GM12878 (cell line): ENCODE measurements at regions of chr13 and their contacts with region 1.

Region 1: GRCh38 chr13:45623515-45624090 is 8.1 kb upstream of the ERICH6B start:
- DNase-seq: peak; percentile 21
- ATAC-seq: peak; percentile 80
- H3K4me3 ChIP-seq: no peak overlapping the region
- H3K27ac ChIP-seq: no peak overlapping the region
- H3K4me1 ChIP-seq: peaks cover 5% of the 10 kb centered on the region
- H3K27me3 ChIP-seq: peaks cover 0 to 2% of the 10 kb centered on the region in 2 experiments; a peak in 1 of 4 replicates
- CTCF ChIP-seq: peak; percentile 34 to 60 (median 51); a peak in 5 of 6 replicates
- EP300 ChIP-seq: no peak
- POLR2A ChIP-seq: no peak
- RAD21 ChIP-seq: peak; percentile 68

Region 2: GRCh38 chr13:44899967-44900366 is 723.6 kb before region 1 on chr13:
- CTCF ChIA-PET with region 1: no interaction called
- POLR2A ChIA-PET with region 1: no interaction called
- RAD21 ChIA-PET with region 1: no interaction called
- SMC1A ChIA-PET with region 1: no interaction called
- in situ Hi-C with region 1: no loop called
- intact Hi-C with region 1: no loop called
- DNase-seq: no peak
- ATAC-seq: no peak
- H3K4me3 ChIP-seq: no peak overlapping the region
- H3K27ac ChIP-seq: no peak overlapping the region
- H3K4me1 ChIP-seq: no peaks in the 10 kb centered on the region
- H3K27me3 ChIP-seq: peaks cover 0 to 3% of the 10 kb centered on the region in 2 experiments; a peak in 2 of 4 replicates
- CTCF ChIP-seq: no peak
- EP300 ChIP-seq: no peak
- POLR2A ChIP-seq: no peak
- RAD21 ChIP-seq: no peak

Region 3: GRCh38 chr13:45683701-45684100 is 60.1 kb after region 1 on chr13:
- CTCF ChIA-PET with region 1: interaction called, 17 read pairs
- POLR2A ChIA-PET with region 1: interaction called, 4 read pairs
- RAD21 ChIA-PET with region 1: interaction called, 6 read pairs
- SMC1A ChIA-PET with region 1: interaction called, 19 read pairs
- in situ Hi-C with region 1: no loop called
- intact Hi-C with region 1: no loop called
- DNase-seq: no peak
- ATAC-seq: peak; percentile 63
- H3K4me3 ChIP-seq: no peak overlapping the region
- H3K27ac ChIP-seq: no peak overlapping the region
- H3K4me1 ChIP-seq: no peaks in the 10 kb centered on the region
- H3K27me3 ChIP-seq: no peaks in the 10 kb centered on the region
- CTCF ChIP-seq: peak; percentile 27 to 36 (median 31); a peak in 4 of 6 replicates
- EP300 ChIP-seq: no peak
- POLR2A ChIP-seq: no peak
- RAD21 ChIP-seq: no peak

Region 4: DNA sequence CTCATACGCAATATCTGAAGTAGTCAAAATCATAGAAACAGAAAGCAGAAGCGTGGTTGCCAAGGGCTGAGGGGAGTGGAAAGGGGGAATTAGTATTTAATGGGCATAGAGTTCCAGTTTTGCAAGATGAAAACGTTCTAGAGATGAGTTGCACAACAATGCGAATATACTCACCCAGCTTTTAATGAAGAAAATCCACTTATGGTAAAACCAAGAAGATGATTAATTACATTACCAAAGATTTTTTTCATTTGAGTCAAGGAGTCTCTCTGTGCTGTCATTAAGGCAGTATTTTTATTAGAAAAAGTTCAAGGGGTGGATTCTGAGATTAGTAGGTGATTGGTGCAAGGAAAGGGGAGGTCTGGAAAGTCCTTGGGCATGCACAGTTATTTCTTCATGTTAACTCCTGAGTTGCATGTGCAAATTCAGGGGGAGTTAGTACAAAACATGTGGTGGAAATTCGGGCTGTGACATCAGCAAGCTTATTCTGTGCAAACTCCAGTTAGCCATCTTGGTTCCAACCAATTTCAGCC is 71.7 kb after region 1 on chr13:
- CTCF ChIA-PET with region 1: interaction called, 36 read pairs
- POLR2A ChIA-PET with region 1: no interaction called
- RAD21 ChIA-PET with region 1: interaction called, 15 read pairs
- SMC1A ChIA-PET with region 1: interaction called, 29 read pairs
- in situ Hi-C with region 1: no loop called
- intact Hi-C with region 1: no loop called
- DNase-seq: peak; percentile 68
- ATAC-seq: peak; percentile 66
- H3K4me3 ChIP-seq: peak overlapping the region; percentile 66
- H3K27ac ChIP-seq: peak overlapping the region; percentile 98
- H3K4me1 ChIP-seq: peaks cover 14% of the 10 kb centered on the region
- H3K27me3 ChIP-seq: no peaks in the 10 kb centered on the region
- CTCF ChIP-seq: no peak
- EP300 ChIP-seq: peak in 1 of 2 experiments; percentile 57; a peak in 1 of 4 replicates
- POLR2A ChIP-seq: 0 out of 2 replicates have a peak, but pooled peaks have one; percentile 23
- RAD21 ChIP-seq: no peak

Region 5: DNA sequence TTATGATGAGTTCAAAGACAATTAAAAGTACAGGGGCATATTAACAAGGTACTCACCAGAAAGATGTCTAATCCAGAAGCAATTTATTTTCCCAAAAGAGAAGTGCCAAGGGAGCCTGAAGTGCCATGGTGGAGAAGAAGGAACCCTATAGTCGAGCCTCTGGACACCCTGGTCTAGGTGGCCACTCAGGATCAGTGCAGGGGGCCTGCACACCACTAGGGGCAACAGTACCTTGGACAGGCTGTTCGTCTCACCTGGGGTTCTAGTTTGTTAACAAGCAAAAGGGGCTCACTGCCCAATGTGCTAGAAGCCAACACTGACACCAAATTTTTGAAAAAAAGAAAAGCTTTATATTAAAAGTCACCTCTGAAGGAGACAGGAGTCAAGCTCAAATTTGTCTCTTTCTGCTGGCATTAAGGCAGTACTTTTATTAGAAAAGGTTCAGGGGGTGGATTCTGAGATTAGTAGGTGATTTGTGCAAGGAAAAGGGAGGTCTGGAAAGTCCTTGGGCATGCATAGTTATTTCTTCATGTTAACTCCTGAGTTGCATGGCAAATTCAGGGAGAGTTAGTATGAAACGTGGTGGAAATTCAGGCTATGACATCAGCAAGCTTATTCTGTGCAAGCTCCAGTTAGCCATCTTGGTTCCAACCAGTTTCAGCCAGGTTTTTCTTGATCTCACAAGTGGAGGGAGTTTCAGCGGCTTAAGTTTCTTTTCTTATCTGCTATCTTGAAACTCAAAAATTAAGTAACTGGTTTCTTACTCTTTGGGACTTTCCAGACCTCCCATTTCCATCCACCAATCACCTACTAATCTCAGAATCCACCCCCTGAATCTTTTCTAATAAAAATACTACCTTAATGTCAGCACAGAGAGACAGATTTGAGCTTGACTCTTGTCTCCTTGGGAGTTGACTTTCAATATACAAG is 77.6 kb after region 1 on chr13:
- CTCF ChIA-PET with region 1: interaction called, 36 read pairs
- POLR2A ChIA-PET with region 1: no interaction called
- RAD21 ChIA-PET with region 1: interaction called, 15 read pairs
- SMC1A ChIA-PET with region 1: interaction called, 29 read pairs
- in situ Hi-C with region 1: no loop called
- intact Hi-C with region 1: no loop called
- DNase-seq: peak; percentile 93
- ATAC-seq: peak; percentile 81
- H3K4me3 ChIP-seq: peak overlapping the region; percentile 88
- H3K27ac ChIP-seq: peak overlapping the region; percentile 98
- H3K4me1 ChIP-seq: peaks cover 46% of the 10 kb centered on the region
- H3K27me3 ChIP-seq: no peaks in the 10 kb centered on the region
- CTCF ChIP-seq: peak; percentile 53 to 86 (median 85)
- EP300 ChIP-seq: no peak; a peak in 1 of 4 replicates
- POLR2A ChIP-seq: peak; percentile 82
- RAD21 ChIP-seq: peak; percentile 47

Region 6: GRCh38 chr13:45718063-45718462 is 94.5 kb after region 1 on chr13:
- CTCF ChIA-PET with region 1: interaction called, 361 read pairs
- POLR2A ChIA-PET with region 1: interaction called, 3 read pairs
- RAD21 ChIA-PET with region 1: interaction called, 108 read pairs
- SMC1A ChIA-PET with region 1: interaction called, 233 read pairs
- in situ Hi-C with region 1: loop called (anchors 5 kb)
- intact Hi-C with region 1: loop called (anchors 1 kb)
- DNase-seq: no peak
- ATAC-seq: peak; percentile 97
- H3K4me3 ChIP-seq: no peak overlapping the region
- H3K27ac ChIP-seq: peak overlapping the region; percentile 6; the same call in 1 of the 2 replicates
- H3K4me1 ChIP-seq: no peaks in the 10 kb centered on the region
- H3K27me3 ChIP-seq: no peaks in the 10 kb centered on the region
- CTCF ChIP-seq: peak; percentile 76 to 81 (median 80)
- EP300 ChIP-seq: no peak
- POLR2A ChIP-seq: no peak
- RAD21 ChIP-seq: peak; percentile 95

Region 7: GRCh38 chr13:45728759-45729158 is 105.2 kb after region 1 on chr13:
- CTCF ChIA-PET with region 1: interaction called, 361 read pairs
- POLR2A ChIA-PET with region 1: no interaction called
- RAD21 ChIA-PET with region 1: interaction called, 108 read pairs
- SMC1A ChIA-PET with region 1: interaction called, 233 read pairs
- in situ Hi-C with region 1: no loop called
- intact Hi-C with region 1: loop called (anchors 1 kb)
- DNase-seq: no peak
- ATAC-seq: peak; percentile 99
- H3K4me3 ChIP-seq: no peak overlapping the region
- H3K27ac ChIP-seq: no peak overlapping the region
- H3K4me1 ChIP-seq: no peaks in the 10 kb centered on the region
- H3K27me3 ChIP-seq: no peaks in the 10 kb centered on the region
- CTCF ChIP-seq: peak; percentile 58 to 62 (median 61)
- EP300 ChIP-seq: no peak
- POLR2A ChIP-seq: no peak
- RAD21 ChIP-seq: peak; percentile 70

Region 8: GRCh38 chr13:46062185-46062584 is 438.6 kb after region 1 on chr13:
- CTCF ChIA-PET with region 1: no interaction called
- POLR2A ChIA-PET with region 1: no interaction called
- RAD21 ChIA-PET with region 1: no interaction called
- SMC1A ChIA-PET with region 1: no interaction called
- in situ Hi-C with region 1: no loop called
- intact Hi-C with region 1: no loop called
- DNase-seq: no peak
- ATAC-seq: no peak
- H3K4me3 ChIP-seq: no peak overlapping the region
- H3K27ac ChIP-seq: no peak overlapping the region
- H3K4me1 ChIP-seq: no peaks in the 10 kb centered on the region
- H3K27me3 ChIP-seq: no peaks in the 10 kb centered on the region
- CTCF ChIP-seq: no peak
- EP300 ChIP-seq: no peak
- POLR2A ChIP-seq: no peak
- RAD21 ChIP-seq: no peak

Region 9: DNA sequence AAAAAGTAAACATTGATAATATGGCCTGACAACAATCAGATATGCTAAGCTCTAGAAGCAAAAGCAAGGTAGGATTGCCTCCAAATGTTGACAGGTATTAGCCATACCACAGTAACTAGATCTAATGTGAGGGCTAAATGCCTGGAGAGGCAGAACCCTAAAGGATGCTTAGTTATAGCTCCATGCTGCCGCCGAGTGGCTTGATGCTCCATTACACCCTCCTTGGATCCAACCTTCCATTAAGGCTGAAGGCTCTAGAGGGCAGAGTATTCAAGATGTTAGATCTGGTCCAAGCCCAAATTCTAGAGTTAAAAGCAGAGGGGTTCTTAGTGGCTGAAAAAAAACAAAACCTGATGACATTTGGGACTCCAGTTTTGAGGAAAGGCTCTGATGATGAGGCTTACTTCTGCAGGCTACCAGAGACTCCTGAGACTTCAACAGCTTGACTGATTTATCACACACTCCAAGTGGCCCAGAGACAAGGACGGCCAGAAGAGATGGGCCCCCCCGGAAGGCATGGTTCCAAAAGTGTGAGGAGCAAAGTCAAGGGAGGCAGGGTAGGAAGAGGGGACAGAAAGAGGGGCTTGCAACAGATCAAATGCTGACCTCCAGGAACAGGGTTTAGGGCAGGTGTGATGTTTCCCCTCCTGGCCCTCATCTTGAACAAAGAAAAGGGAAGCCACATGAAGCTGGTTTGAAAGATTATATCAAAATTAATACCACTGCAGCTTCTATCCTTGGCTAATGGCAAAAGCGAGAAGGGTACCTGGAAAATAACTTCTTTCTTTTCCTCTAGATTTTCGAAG is 503.2 kb after region 1 on chr13:
- CTCF ChIA-PET with region 1: interaction called, 4 read pairs
- POLR2A ChIA-PET with region 1: no interaction called
- RAD21 ChIA-PET with region 1: no interaction called
- SMC1A ChIA-PET with region 1: no interaction called
- in situ Hi-C with region 1: no loop called
- intact Hi-C with region 1: loop called (anchors 5 kb)
- DNase-seq: no peak
- ATAC-seq: peak; percentile 77
- H3K4me3 ChIP-seq: no peak overlapping the region
- H3K27ac ChIP-seq: no peak overlapping the region
- H3K4me1 ChIP-seq: no peaks in the 10 kb centered on the region
- H3K27me3 ChIP-seq: no peaks in the 10 kb centered on the region
- CTCF ChIP-seq: peak; percentile 92 to 98 (median 92); a peak in 5 of 6 replicates
- EP300 ChIP-seq: no peak
- POLR2A ChIP-seq: peak; percentile 65
- RAD21 ChIP-seq: peak; percentile 88